ENCODE measurements at regions of chr4 and their contacts with region 1.

Region 1: GRCh38 chr4:39638354-39639240 is at the start of gene SMIM14:
- DNase-seq: peak; percentile 98
- H3K4me3 Mint-ChIP-seq: peak within 1 kb of the TSS; percentile 87
- H3K27ac Mint-ChIP-seq: peak within 1 kb of the TSS; percentile 95
- H3K4me1 Mint-ChIP-seq: peaks cover 15% of the 10 kb centered on the region
- H3K27me3 Mint-ChIP-seq: no peaks in the 10 kb centered on the region
- CTCF ChIP-seq: no peak
- total RNA-seq, gene SMIM14: 27.3 and 36.0 TPM in 2 replicates

Region 2: GRCh38 chr4:39469429-39470077 is 169.0 kb before region 1 on chr4:
- CTCF ChIA-PET with region 1: interaction called, 4 read pairs
- POLR2A ChIA-PET with region 1: interaction called, 10 read pairs
- intact Hi-C with region 1: loop called (anchors 1 kb)
- DNase-seq: peak; percentile 80
- H3K4me3 Mint-ChIP-seq: no peak overlapping the region
- H3K27ac Mint-ChIP-seq: no peak overlapping the region
- H3K4me1 Mint-ChIP-seq: peaks cover 13% of the 10 kb centered on the region
- H3K27me3 Mint-ChIP-seq: no peaks in the 10 kb centered on the region
- CTCF ChIP-seq: peak; percentile 71

Region 3: GRCh38 chr4:39614487-39615162 is 24.0 kb before region 1 on chr4:
- CTCF ChIA-PET with region 1: no interaction called
- POLR2A ChIA-PET with region 1: interaction called, 71 read pairs
- intact Hi-C with region 1: no loop called
- DNase-seq: peak; percentile 70
- H3K4me3 Mint-ChIP-seq: no peak overlapping the region
- H3K27ac Mint-ChIP-seq: no peak overlapping the region
- H3K4me1 Mint-ChIP-seq: peaks cover 5% of the 10 kb centered on the region
- H3K27me3 Mint-ChIP-seq: no peaks in the 10 kb centered on the region
- CTCF ChIP-seq: no peak

Region 4: DNA sequence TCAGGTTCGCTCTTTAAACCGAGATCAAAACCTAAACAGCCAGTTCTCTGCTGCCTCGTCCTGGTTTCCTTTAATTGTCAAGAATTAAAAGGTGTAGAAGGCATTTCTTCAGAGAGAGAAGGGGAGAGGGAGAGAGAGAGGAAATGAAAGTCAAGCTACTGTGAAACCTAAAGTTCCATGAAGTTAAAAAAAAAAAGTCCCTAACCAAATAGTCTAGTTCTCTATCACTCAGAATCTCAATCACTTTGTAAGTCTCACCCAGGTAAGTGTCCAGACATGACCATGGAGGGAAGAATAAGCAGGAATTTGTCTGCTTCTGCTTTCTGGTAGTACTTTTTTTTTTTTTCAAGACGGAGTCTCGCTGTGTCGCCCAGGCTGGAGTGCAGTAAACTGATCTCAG is 18.9 kb after region 1 on chr4:
- CTCF ChIA-PET with region 1: interaction called, 4 read pairs
- POLR2A ChIA-PET with region 1: interaction called, 29 read pairs
- intact Hi-C with region 1: no loop called
- DNase-seq: no peak
- H3K4me3 Mint-ChIP-seq: no peak overlapping the region
- H3K27ac Mint-ChIP-seq: no peak overlapping the region
- H3K4me1 Mint-ChIP-seq: peaks cover 17% of the 10 kb centered on the region
- H3K27me3 Mint-ChIP-seq: no peaks in the 10 kb centered on the region
- CTCF ChIP-seq: no peak

Region 5: DNA sequence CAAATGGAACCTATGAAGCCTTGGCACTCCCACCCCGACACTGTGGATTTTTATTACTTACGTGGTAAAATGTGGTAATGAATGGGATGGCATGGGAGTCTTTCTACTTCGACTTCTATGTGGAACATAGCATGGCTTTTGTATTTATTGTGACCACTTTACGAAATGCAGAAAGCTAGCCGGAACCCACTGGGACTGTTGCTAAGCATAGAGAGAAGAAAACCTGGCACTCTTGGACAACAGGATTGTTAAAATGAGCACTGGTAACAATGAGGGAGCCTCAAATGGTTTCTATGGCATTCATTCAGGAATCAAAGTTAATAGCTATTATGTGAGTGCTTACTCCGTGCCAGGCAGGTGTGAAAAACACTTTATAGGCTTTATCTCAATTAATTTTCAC is 225.8 kb after region 1 on chr4:
- CTCF ChIA-PET with region 1: no interaction called
- POLR2A ChIA-PET with region 1: no interaction called
- intact Hi-C with region 1: no loop called
- DNase-seq: no peak
- H3K4me3 Mint-ChIP-seq: no peak overlapping the region
- H3K27ac Mint-ChIP-seq: no peak overlapping the region
- H3K4me1 Mint-ChIP-seq: no peaks in the 10 kb centered on the region
- H3K27me3 Mint-ChIP-seq: no peaks in the 10 kb centered on the region
- CTCF ChIP-seq: no peak